ENCODE measurements at regions of chr11 and their contacts with region 1.

Region 1: DNA sequence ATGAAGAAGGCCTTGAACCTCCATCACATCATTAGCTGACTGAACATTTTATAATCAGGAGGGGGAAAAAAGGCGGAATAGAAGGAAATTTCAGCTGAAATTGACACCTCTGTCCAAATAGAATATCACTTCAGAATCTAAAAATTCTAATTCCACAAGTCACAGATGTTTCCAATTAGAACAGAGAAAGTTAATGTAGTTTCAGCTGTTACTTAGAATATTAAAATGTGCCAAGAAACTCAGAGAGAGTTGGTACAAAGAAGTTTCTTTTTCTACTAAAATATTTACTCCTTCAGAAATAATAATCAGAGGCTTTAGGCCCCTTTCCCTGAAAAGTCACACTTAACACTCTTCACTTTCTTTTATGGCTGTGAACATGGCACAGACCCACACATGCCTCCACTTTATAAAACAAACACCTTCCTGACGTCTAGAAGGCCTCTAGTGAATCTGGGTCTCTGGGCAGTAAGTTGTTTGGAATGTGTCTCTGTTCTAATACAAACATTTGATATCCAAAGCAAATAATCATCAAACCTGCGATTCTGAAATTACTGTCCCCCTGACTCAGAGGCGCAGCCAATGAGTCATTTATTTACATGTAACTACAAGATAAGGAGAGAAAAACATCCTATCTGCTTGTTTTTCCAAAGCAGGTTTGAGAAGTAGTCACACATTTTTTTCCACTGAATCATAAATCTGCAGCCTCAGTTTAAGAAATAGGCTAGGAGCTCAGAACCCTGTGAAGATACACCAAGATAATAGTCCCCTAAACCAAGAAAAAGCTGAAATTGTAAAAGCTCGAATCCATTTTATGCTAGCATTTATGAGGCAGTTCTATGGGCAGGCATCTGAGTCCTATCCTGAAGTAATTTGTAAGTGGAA is 148.4 kb downstream of the ME3 start:
- DNase-seq: peak; percentile 99
- ATAC-seq: peak; percentile 96
- H3K4me3 ChIP-seq: peak overlapping the region in 1 of 2 experiments; percentile 9; a peak in 1 of 4 replicates
- H3K27ac ChIP-seq: peak overlapping the region; percentile 100
- H3K4me1 ChIP-seq: peaks cover 43% of the 10 kb centered on the region
- H3K27me3 ChIP-seq: no peaks in the 10 kb centered on the region
- CTCF ChIP-seq: no peak

Region 2: DNA sequence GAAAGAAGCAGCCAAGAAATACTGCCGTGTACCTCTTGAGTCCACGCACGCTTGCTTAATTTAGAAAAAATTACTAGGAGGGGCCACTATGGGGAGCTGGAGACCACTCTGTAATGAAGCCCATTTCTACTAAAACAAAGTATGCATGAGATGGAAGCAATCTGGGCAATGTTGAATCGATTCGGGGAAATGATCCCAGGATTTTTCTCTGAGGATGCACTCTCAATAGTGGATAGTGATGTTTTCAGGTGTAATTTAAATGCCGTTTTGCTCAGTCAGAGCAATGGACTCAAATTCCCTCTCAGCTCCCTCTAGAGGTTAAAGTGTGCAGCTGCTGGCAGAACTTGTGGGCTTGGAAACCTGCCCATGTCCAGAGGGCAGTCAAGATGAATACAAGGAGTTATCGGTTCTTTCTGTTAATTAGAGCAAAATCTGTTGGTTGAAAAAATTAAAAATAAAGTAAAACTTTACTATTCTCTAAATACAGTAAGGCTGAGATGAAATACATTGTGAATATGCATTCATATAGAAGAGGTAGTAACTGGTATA is 84.3 kb after region 1 on chr11:
- CTCF ChIA-PET with region 1: no interaction called
- POLR2A ChIA-PET with region 1: no interaction called
- in situ Hi-C with region 1: no loop called
- intact Hi-C with region 1: loop called (anchors 5 kb)
- DNase-seq: no peak
- ATAC-seq: peak; percentile 75
- H3K4me3 ChIP-seq: peak overlapping the region in 1 of 2 experiments; percentile 21; a peak in 2 of 4 replicates
- H3K27ac ChIP-seq: peak overlapping the region; percentile 78
- H3K4me1 ChIP-seq: peaks cover 52% of the 10 kb centered on the region
- H3K27me3 ChIP-seq: no peaks in the 10 kb centered on the region
- CTCF ChIP-seq: peak; percentile 100

Measured in Panc1 (cell line).